ENCODE measurements at regions of chr12 and their contacts with region 1.

Region 1: GRCh38 chr12:31959701-31960391 is 631 bp downstream of the RESF1 start:
- DNase-seq: peak; percentile 86
- ATAC-seq: peak; percentile 75

Region 2: DNA sequence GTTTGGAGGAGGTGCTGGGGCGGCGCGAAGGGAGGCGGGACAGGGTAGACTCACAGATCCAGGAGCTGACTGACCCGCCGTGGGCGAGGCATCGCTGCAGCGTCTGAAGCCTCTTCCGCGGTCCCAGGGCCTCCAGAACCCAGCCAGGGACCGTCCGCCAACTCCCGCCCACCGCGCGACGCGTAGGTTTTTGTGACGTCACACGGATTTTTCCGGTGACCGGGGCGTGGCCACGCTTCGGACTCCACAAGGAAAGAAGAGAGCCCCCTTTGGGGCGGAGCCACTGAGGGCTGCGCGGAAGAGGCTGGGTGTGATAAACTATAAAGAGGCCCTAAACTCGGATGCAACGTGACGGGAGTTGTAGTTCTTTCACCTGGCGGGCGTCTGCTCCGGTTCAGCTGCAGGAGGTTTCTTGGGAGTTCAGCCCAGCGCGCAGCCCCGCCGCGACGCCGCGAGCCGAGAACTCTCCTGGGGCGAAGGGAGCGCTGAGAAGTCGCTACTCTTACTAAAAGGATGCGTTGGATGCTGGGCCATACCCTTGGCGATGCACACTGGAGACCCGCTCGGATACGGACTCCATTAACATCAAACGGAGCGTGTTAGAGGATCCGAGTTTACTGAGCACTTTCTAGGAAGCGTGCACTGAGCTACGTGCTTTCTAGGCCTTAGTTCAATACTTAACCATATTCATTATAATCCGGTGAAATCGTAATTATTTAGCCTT is 230.8 kb before region 1 on chr12 and contains the start of gene AMN1:
- intact Hi-C with region 1: loop called (anchors 10 kb)
- DNase-seq: peak; percentile 100
- ATAC-seq: peak; percentile 97
- total RNA-seq, gene AMN1: 9.7 TPM

Measured in Right ventricle myocardium superior (tissue), 1 donor.